HepG2 (cell line): ENCODE measurements at regions of chr6 and their contacts with region 1.

Region 1: DNA sequence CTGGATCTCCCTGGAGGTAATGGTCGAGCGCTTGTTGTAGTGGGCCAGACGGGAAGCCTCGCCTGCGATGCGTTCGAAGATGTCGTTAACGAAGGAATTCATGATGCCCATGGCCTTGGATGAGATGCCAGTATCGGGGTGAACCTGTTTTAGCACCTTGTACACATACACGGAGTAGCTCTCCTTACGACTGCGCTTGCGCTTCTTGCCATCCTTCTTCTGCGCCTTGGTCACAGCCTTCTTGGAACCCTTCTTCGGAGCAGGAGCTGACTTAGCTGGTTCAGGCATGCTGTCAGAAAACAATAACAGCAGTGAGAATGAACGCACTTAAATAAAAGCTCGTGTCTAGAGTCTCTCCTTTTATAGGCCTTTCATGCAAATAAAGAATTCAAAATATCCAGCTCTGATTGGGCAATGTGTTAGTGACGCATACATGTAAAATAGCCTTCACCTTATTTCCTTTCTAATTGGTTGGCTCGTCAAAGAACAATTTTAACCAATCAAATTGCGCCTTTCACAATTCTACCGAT is 129.2 kb downstream of the HFE start:
- DNase-seq: peak; percentile 99
- ATAC-seq: peak; percentile 64
- H3K4me3 ChIP-seq: peak overlapping the region; percentile 60 to 75 (median 72)
- H3K27ac ChIP-seq: peak overlapping the region; percentile 89
- H3K4me1 ChIP-seq: peaks cover 30% of the 10 kb centered on the region
- H3K27me3 ChIP-seq: no peaks in the 10 kb centered on the region; a peak in 1 of 5 replicates
- CTCF ChIP-seq: no peak
- EP300 ChIP-seq: peak in 1 of 2 experiments; percentile 48; a peak in 1 of 4 replicates
- POLR2A ChIP-seq: peak; percentile 97 to 99
- RAD21 ChIP-seq: peak; percentile 26; the same call in 1 of the 2 replicates

Region 2: DNA sequence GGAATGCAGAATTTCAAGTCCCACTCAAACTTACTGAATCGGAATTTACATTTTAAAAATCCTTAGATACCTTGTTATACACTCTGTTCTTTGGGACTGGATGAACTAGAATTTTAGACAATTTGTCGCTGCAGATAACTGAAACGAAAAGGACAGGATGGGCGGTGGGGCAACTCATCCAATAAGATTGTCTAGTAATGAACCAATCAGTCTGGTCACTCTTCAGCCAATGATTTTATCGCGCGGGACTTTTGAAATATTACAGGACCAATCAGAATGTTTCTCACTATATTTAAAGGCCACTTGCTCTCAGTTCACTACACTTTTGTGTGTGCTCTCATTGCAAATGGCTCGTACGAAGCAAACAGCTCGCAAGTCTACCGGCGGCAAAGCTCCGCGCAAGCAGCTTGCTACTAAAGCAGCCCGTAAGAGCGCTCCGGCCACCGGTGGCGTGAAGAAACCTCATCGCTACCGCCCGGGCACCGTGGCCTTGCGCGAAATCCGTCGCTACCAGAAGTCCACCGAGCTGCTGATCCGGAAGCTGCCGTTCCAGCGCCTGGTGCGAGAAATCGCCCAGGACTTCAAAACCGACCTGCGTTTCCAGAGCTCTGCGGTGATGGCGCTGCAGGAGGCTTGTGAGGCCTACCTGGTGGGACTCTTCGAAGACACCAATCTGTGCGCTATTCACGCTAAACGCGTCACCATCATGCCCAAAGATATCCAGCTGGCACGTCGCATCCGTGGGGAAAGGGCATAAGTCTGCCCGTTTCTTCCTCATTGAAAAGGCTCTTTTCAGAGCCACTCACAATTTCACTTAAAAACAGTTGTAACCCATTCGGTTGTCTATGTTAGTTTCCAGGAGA is 171.1 kb before region 1 on chr6:
- CTCF ChIA-PET with region 1: no interaction called
- POLR2A ChIA-PET with region 1: interaction called, 57 read pairs
- in situ Hi-C with region 1: no loop called
- intact Hi-C with region 1: no loop called
- DNase-seq: peak; percentile 99
- ATAC-seq: peak; percentile 74
- H3K4me3 ChIP-seq: peak overlapping the region; percentile 58 to 73 (median 63)
- H3K27ac ChIP-seq: peak overlapping the region; percentile 94
- H3K4me1 ChIP-seq: peaks cover 31% of the 10 kb centered on the region
- H3K27me3 ChIP-seq: no peaks in the 10 kb centered on the region; a peak in 1 of 5 replicates
- CTCF ChIP-seq: peak; percentile 62
- EP300 ChIP-seq: peak in 1 of 2 experiments; percentile 44; a peak in 2 of 4 replicates
- POLR2A ChIP-seq: peak; percentile 98 to 100
- RAD21 ChIP-seq: peak; percentile 69

Region 3: DNA sequence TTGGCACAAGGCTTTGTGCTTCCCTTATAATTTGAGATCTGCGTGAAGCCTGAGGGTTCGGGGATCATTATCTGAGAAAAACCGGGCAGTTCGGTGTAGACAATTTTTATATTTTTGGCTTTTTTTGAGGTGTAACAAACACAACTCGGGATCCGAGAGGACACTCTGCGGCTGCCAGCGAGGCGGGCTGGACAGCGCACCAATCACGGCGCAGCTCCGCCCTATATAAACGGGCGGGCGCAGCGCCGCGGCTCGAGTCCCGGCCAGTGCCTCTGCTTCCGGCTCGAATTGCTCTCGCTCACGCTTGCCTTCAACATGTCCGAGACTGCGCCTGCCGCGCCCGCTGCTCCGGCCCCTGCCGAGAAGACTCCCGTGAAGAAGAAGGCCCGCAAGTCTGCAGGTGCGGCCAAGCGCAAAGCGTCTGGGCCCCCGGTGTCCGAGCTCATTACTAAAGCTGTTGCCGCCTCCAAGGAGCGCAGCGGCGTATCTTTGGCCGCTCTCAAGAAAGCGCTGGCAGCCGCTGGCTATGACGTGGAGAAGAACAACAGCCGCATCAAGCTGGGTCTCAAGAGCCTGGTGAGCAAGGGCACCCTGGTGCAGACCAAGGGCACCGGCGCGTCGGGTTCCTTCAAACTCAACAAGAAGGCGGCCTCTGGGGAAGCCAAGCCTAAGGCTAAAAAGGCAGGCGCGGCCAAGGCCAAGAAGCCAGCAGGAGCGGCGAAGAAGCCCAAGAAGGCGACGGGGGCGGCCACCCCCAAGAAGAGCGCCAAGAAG is 60.2 kb before region 1 on chr6:
- CTCF ChIA-PET with region 1: no interaction called
- POLR2A ChIA-PET with region 1: interaction called, 127 read pairs
- in situ Hi-C with region 1: no loop called
- intact Hi-C with region 1: loop called (anchors 1 kb)
- DNase-seq: peak; percentile 88
- ATAC-seq: peak; percentile 77
- H3K4me3 ChIP-seq: peak overlapping the region; percentile 94 to 96 (median 95)
- H3K27ac ChIP-seq: peak overlapping the region; percentile 95
- H3K4me1 ChIP-seq: peaks cover 40% of the 10 kb centered on the region
- H3K27me3 ChIP-seq: no peaks in the 10 kb centered on the region; a peak in 1 of 5 replicates
- CTCF ChIP-seq: peak; percentile 37
- EP300 ChIP-seq: peak; percentile 7 to 60; a peak in 1 of 4 replicates
- POLR2A ChIP-seq: peak; percentile 99
- RAD21 ChIP-seq: peak; percentile 69

Region 4: DNA sequence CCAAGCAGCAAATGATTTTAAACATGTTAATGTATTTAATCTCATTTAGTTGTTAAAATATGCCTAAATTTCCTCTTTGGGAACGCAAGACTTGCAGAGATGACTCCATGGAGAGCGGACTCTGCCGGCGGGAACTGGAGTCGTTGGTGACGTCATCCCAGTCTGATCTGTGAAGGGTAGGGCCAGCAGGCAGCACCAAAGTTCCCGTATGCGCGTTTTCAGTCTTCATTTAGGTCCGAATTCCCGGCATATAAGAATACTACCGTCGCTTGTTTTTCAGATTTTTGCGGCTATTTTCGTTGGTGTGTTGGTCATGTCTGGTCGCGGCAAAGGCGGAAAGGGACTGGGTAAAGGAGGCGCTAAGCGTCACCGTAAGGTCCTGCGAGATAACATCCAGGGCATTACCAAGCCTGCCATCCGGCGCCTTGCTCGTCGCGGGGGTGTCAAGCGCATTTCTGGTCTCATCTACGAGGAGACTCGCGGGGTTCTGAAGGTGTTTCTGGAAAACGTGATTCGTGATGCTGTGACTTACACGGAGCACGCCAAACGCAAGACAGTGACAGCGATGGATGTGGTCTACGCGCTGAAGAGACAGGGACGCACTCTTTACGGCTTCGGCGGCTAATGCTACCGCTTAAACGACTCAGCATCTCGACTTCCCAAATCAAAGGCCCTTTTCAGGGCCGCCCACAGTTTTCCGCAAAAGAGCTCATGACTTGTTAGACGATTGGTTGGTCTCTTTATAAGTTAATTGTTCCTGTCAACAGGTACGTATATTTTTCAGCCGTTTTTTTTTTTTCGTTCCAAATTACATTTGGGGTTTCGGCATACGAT is 11.9 kb before region 1 on chr6:
- CTCF ChIA-PET with region 1: no interaction called
- POLR2A ChIA-PET with region 1: interaction called, 336 read pairs
- in situ Hi-C with region 1: no loop called
- intact Hi-C with region 1: loop called (anchors 1 kb)
- DNase-seq: peak; percentile 98
- ATAC-seq: peak; percentile 75
- H3K4me3 ChIP-seq: peak overlapping the region; percentile 62 to 95 (median 77)
- H3K27ac ChIP-seq: peak overlapping the region; percentile 87
- H3K4me1 ChIP-seq: peaks cover 36% of the 10 kb centered on the region
- H3K27me3 ChIP-seq: no peaks in the 10 kb centered on the region; a peak in 1 of 5 replicates
- CTCF ChIP-seq: peak; percentile 53
- EP300 ChIP-seq: peak in 1 of 2 experiments; percentile 89; a peak in 3 of 4 replicates
- POLR2A ChIP-seq: peak; percentile 98 to 99
- RAD21 ChIP-seq: no peak; the same call in 1 of the 2 replicates

Region 5: DNA sequence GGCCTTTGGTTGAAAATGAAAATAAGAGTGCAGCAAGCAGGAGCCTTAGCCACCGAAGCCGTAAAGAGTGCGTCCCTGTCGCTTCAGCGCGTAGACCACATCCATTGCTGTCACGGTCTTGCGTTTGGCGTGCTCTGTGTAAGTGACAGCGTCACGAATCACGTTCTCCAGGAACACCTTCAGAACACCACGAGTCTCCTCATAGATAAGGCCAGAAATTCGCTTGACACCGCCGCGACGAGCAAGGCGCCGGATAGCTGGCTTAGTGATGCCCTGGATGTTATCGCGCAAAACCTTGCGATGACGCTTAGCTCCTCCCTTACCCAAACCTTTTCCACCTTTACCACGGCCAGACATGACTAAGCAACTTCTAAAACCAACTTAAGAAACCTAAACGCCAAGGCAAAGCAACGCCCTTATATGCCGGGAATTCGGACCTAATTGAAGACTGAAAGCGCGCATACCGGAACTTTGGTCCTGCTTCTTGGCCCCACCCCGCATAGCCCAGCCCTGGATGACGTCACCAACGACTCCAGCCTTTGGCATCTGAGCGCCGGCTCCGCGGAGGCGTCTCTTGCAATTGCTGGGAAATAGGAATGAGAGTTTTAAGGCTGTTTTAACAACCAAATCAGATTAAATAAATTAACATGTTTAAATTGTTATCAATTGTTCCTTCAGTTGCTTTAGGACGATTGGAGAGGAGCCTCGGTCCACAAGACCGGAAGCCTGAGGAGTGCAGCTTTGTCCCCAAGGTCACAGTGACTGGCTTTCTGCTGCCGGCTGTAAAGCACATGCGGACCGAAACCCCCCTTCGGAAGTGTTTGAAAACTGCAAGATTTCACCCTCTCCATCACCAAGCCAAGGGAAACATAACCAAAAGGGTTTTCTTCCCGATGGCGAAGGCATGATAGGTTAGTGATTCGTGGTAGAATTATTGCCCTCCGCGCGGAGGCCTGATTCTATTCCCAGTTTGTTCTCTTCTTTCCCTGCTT is 69.0 kb after region 1 on chr6:
- CTCF ChIA-PET with region 1: no interaction called
- POLR2A ChIA-PET with region 1: interaction called, 34 read pairs
- in situ Hi-C with region 1: no loop called
- intact Hi-C with region 1: no loop called
- DNase-seq: peak; percentile 93
- ATAC-seq: peak; percentile 84
- H3K4me3 ChIP-seq: peak overlapping the region; percentile 76 to 89 (median 82)
- H3K27ac ChIP-seq: peak overlapping the region; percentile 85
- H3K4me1 ChIP-seq: peaks cover 19% of the 10 kb centered on the region
- H3K27me3 ChIP-seq: no peaks in the 10 kb centered on the region; a peak in 1 of 5 replicates
- CTCF ChIP-seq: peak; percentile 14; the same call in 1 of the 2 replicates
- EP300 ChIP-seq: peak; percentile 37 to 85; a peak in 3 of 4 replicates
- POLR2A ChIP-seq: peak; percentile 92 to 95
- RAD21 ChIP-seq: 0 out of 2 replicates have a peak, but pooled peaks have one; percentile 19

Region 6: DNA sequence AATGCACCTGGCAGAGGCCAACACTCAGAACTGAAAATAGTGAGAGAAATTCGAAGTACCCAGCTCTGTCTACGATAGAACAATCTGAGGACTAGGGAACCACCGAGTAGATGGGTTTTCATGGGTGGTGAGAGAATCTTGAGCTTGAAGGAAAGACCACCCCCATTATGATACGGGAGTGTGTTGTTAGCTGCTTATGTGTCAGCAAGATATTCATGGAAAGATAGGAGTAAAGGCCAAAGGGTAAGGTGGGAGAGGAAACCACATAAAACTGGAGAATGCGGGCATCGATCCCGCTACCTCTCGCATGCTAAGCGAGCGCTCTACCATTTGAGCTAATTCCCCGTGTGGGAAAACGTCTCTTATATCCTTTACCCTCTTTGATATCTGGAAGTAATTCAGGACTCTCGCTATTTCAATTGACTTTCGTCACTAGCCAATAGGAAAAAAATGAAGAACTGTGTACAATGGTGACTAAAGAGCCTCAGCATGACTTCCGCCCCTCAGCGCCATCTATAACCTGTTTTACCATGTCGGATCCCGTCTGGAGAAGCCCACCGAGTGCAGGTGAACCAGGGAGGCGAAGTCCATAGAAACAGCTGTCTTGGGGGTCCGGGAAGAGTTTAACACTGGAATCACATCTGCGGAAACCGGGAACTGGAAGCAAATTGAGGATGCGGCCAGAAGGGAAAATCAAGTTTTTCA is 355.3 kb after region 1 on chr6:
- CTCF ChIA-PET with region 1: no interaction called
- POLR2A ChIA-PET with region 1: no interaction called
- in situ Hi-C with region 1: no loop called
- intact Hi-C with region 1: no loop called
- DNase-seq: peak; percentile 95
- ATAC-seq: peak; percentile 82
- H3K4me3 ChIP-seq: peak overlapping the region; percentile 70 to 79 (median 70)
- H3K27ac ChIP-seq: peak overlapping the region; percentile 72
- H3K4me1 ChIP-seq: peaks cover 50% of the 10 kb centered on the region
- H3K27me3 ChIP-seq: no peaks in the 10 kb centered on the region; a peak in 1 of 5 replicates
- CTCF ChIP-seq: peak; percentile 30
- EP300 ChIP-seq: peak in 1 of 2 experiments; percentile 40; a peak in 1 of 4 replicates
- POLR2A ChIP-seq: peak; percentile 22 to 28; a peak in 1 of 4 replicates
- RAD21 ChIP-seq: 0 out of 2 replicates have a peak, but pooled peaks have one; percentile 31

Region 7: DNA sequence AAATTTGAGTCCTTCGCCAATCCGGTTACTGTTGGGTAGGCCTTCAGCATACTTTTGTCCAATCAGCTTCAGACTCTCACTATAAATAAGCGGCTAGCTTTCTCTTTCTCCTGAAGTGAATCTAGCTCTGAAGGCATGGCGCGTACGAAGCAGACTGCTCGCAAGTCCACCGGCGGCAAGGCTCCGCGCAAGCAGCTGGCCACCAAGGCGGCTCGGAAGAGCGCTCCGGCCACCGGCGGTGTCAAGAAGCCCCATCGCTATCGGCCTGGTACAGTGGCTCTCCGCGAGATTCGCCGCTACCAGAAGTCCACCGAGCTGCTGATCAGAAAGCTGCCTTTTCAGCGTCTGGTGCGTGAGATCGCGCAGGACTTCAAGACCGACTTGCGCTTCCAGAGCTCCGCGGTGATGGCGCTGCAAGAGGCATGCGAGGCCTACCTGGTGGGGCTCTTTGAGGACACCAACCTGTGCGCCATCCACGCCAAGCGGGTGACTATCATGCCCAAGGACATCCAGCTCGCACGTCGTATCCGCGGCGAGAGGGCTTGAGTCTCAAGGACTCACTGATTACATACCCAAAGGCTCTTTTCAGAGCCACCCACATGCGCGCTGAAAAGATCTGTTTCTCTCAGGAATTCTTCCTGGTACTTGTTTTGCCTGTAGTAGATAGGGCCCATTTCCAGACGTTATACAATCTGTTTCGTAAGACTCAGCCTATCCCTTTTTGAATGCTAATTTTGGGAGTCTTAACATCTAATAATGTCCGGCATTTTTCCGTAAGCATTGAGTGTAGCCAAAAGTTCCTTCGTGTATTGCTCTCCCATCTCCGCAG is 1593.7 kb after region 1 on chr6:
- CTCF ChIA-PET with region 1: no interaction called
- POLR2A ChIA-PET with region 1: interaction called, 11 read pairs
- in situ Hi-C with region 1: no loop called
- intact Hi-C with region 1: no loop called
- DNase-seq: peak; percentile 98
- ATAC-seq: peak; percentile 57
- H3K4me3 ChIP-seq: peak overlapping the region; percentile 76 to 84 (median 79)
- H3K27ac ChIP-seq: peak overlapping the region; percentile 89
- H3K4me1 ChIP-seq: peaks cover 54% of the 10 kb centered on the region
- H3K27me3 ChIP-seq: no peaks in the 10 kb centered on the region; a peak in 1 of 5 replicates
- CTCF ChIP-seq: peak; percentile 65
- EP300 ChIP-seq: peak in 1 of 2 experiments; percentile 33; a peak in 1 of 4 replicates
- POLR2A ChIP-seq: peak; percentile 99 to 100
- RAD21 ChIP-seq: peak; percentile 58